ENCODE measurements at regions of chr6 and their contacts with region 1.

Region 1: DNA sequence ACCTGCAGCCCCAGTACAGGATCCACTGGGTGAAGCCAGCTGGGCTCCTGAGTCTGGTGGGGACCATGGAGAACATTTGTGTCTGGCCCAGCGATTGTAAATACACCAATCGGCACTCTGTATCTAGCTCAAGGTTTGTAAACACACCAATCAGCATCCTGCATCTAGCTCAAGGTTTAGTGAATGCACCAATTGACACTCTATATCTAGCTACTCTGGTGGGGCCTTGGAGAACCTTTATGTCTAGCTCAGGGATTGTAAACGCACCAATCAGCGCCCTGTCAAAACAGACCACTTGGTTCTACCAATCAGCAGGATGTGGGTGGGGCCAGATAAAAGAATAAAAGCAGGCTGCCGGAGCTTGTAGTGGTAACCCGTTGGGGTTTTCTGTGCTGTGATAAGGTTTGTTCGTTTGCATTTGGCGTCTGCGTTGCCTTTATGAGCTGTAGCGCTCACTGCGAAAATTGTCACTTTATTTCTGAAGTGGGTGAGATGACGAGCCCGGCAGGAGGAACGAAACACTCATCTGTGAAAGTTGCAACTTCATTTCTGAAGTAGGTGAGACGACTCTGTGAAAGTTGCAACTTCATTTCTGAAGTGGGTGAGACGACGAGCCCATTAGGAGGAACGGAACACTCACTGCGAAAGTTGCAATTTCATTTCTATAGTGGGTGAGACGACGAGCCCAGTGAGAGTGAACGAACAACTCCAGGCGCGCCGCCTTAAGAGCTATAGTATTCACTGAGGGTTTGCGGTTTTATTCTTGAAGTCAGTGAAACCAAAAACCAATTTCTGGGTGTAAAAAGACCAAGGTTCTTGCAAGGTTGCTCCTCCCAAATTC is 31.1 kb downstream of the SERPINB6 start:
- DNase-seq: peak; percentile 78
- H3K4me3 Mint-ChIP-seq: peak overlapping the region; percentile 48
- H3K27ac Mint-ChIP-seq: peak overlapping the region; percentile 89
- H3K4me1 Mint-ChIP-seq: peaks cover 55% of the 10 kb centered on the region
- H3K27me3 Mint-ChIP-seq: peaks cover 13% of the 10 kb centered on the region

Region 2: GRCh38 chr6:2542858-2543218 is 397.4 kb before region 1 on chr6:
- intact Hi-C with region 1: loop called (anchors 2 kb)
- DNase-seq: peak; percentile 78
- H3K4me3 Mint-ChIP-seq: peak overlapping the region; percentile 41
- H3K27ac Mint-ChIP-seq: peak overlapping the region; percentile 74
- H3K4me1 Mint-ChIP-seq: peaks cover 39% of the 10 kb centered on the region
- H3K27me3 Mint-ChIP-seq: peaks cover 66% of the 10 kb centered on the region

Region 3: DNA sequence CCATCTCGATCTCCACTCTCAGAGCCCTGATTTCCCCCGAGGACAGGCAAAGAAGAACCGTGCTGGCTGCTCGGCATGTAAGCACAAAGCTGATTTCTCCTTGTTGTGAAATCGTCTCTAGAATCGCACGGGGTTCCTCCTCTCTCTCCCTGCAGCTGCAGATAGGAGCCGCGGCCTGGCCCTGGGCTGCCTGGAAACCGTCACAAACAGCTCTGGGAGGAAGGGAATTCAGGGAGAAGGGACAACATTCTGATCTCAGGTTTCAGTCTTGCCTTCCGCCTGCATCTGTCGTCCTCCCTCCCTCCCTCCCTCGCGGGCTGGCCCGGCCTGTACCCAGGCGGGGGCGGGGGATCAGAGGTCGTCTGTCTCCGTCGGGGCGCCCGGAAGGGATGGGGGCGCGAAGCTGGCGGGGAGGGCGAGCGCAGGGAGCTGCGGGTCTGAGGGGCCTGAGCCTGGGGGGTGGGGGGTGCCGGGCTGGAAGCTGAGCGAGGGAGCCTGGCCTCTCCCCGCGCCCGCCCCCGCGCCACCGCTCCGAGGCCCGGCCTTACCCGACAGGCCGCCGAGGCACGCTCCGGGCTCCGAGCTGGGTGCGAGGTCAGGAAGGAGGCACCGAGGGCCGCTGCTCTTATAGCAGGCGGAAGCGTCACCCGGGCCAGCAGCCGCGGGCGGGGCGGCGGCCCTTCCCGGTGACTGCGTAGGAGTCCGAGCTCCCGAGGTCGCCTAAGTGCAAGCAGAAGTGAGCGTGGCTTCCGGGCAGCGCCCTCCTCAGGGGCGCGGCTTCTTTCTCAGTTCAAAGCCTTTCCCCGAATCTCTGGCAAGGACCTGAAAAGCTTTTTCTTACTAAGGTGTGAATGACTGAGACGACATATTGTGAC is 98.7 kb before region 1 on chr6 and contains the start of gene SERPINB1:
- intact Hi-C with region 1: loop called (anchors 1 kb)
- DNase-seq: peak; percentile 80
- H3K4me3 Mint-ChIP-seq: peak within 1 kb of the TSS; percentile 96
- H3K27ac Mint-ChIP-seq: peak within 1 kb of the TSS; percentile 93
- H3K4me1 Mint-ChIP-seq: peaks cover 62% of the 10 kb centered on the region
- H3K27me3 Mint-ChIP-seq: no peaks in the 10 kb centered on the region
- total RNA-seq, gene SERPINB1: 79.5 and 80.1 TPM in 2 replicates

Region 4: DNA sequence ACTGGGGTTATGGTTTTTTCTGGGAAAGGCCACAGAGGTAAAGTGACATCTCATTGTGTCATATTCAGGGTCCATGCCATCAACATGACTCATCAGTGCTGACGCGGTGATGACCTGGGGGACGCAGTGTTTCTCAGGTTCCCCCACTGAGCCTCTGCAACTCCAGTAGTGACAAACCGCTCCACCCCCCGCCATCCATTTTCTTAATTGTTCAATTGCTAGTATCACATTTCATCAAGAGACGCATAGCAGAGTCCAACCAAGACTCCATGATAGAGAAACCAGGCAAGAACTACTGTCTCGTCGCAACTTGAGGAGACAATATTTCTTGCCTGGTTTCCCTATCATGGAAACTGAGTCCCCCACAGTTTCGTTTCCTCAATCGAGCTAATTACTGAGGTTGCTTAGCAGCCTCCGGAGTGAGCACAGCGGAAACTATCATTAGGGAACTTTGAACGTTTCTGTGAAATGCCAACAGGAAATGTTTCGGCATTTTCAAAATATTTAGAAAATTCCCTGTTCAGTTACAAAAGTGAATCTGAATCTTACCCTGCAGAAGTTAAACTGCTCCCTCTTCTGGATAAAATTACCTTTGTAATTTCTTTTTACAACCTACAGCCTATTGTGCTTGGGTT is 86.4 kb before region 1 on chr6:
- intact Hi-C with region 1: loop called (anchors 1 kb)
- DNase-seq: no peak
- H3K4me3 Mint-ChIP-seq: peak overlapping the region; percentile 73
- H3K27ac Mint-ChIP-seq: peak overlapping the region; percentile 99
- H3K4me1 Mint-ChIP-seq: peaks cover 75% of the 10 kb centered on the region
- H3K27me3 Mint-ChIP-seq: no peaks in the 10 kb centered on the region

Region 5: GRCh38 chr6:2900821-2901644 is 39.2 kb before region 1 on chr6:
- intact Hi-C with region 1: loop called (anchors 1 kb)
- DNase-seq: no peak
- H3K4me3 Mint-ChIP-seq: peak overlapping the region; percentile 94
- H3K27ac Mint-ChIP-seq: peak overlapping the region; percentile 93
- H3K4me1 Mint-ChIP-seq: peaks cover 60% of the 10 kb centered on the region
- H3K27me3 Mint-ChIP-seq: peaks cover 2% of the 10 kb centered on the region

Region 6: DNA sequence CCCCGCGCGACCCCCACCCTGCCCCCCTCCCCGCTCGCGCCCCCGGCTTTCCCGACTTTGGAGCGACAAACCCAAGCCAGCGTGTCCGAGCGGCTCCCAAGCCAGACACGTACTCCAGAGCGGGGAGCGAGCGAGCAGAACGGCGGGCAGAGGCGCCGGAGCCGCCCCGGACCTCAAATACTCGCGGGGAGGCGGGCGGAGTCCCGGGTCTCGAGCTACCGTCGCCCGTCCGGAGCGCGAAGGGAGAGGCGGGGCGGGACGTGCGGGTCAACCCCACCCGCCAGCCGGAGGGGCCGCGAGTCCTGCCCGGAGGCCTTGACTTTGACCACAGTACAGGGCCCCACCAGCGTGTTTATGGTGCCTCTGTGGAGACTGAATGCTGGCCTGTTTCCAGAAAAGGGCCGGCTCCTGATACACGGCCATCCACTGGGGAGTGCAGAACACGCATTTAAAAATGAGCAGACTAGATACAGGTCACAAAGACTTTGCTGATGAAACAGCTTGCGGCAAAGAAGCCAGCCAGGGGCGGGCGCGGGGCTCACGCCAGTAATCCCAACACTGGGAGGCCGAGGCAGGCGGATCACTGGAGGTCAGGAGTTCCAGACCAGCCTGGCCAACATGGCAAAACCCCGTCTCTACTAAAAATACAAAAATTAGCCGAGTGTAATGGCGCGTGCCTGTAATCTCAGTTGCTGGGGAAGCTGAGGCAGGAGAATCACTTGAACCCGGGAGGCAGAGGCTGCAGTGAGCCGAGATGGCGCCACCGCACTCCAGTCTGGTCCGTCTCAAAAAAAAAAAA is 31.4 kb after region 1 on chr6 and contains the start of gene SERPINB6:
- intact Hi-C with region 1: loop called (anchors 2 kb)
- DNase-seq: peak; percentile 23
- H3K4me3 Mint-ChIP-seq: peak within 1 kb of the TSS; percentile 85
- H3K27ac Mint-ChIP-seq: peak within 1 kb of the TSS; percentile 83
- H3K4me1 Mint-ChIP-seq: peaks cover 16% of the 10 kb centered on the region
- H3K27me3 Mint-ChIP-seq: peaks cover 40% of the 10 kb centered on the region
- total RNA-seq, gene SERPINB6: 33.7 and 34.9 TPM in 2 replicates

Region 7: DNA sequence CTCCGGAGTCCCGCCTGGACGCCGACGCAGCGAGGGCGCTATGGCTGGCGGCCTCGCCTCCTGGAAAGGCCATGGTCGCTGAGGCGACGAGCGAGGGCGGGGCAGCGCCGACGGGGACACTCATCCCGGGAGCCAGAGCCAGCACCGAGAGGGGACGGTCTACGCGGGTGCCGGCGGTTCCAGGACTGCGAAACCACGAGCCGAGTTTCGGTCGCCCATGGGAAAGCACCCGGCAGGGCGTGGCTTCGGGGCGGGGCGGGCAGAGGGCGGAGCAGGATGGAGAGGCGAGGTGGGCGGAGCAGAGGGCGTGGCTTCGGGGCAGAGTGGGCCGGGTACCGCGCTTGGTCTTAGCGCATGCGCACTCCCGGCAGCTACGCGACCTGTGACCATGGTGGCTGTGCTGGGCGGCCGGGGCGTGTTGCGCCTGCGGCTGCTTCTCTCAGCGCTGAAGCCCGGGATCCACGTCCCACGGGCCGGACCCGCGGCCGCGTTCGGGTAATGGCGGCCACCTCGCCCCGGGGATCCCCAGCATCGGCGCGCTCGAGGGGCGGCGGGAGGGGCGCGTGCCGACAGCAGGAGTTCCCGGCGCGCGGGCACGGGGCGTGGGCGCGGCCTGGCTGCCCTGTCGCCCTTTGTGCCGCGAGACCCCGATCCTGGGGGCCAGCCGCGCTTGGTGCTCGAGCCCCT is 178.3 kb after region 1 on chr6 and contains the start of gene BPHL:
- intact Hi-C with region 1: loop called (anchors 5 kb)
- DNase-seq: peak; percentile 99
- H3K4me3 Mint-ChIP-seq: peak within 1 kb of the TSS; percentile 82
- H3K27ac Mint-ChIP-seq: peak within 1 kb of the TSS; percentile 78
- H3K4me1 Mint-ChIP-seq: peaks cover 23% of the 10 kb centered on the region
- H3K27me3 Mint-ChIP-seq: no peaks in the 10 kb centered on the region
- total RNA-seq, gene BPHL: 6.6 and 7.9 TPM in 2 replicates

Measured in activated T-helper 1 cell treated with anti-CD3 and anti-CD28 coated beads, Interleukin-12 subunit alpha, Interleukin-12 subunit beta, Interleukin-2, Interleukin-4 antibody, amounts not matched to agents 30 ng/mL and 10 ng/mL and 1 ng/mL, durations not matched to agents 14 hours and 24 hours and 36 hours (primary cell).